ENCODE measurements at regions of chr14 and their contacts with region 1.

Region 1: GRCh38 chr14:68466491-68467032 is 326.3 kb downstream of the ZFP36L1 start:
- DNase-seq: peak; percentile 65 to 100
- H3K4me3 ChIP-seq: peak overlapping the region; percentile 23; the same call in 1 of the 2 replicates
- H3K27ac ChIP-seq: peak overlapping the region; percentile 96
- H3K4me1 ChIP-seq: peaks cover 95% of the 10 kb centered on the region
- H3K27me3 ChIP-seq: no peaks in the 10 kb centered on the region
- CTCF ChIP-seq: no peak

Region 2: GRCh38 chr14:67883717-67884116 is 582.8 kb before region 1 on chr14:
- CTCF ChIA-PET with region 1: no interaction called
- POLR2A ChIA-PET with region 1: interaction called, 30 read pairs
- intact Hi-C with region 1: no loop called
- DNase-seq: peak in 1 of 2 experiments; percentile 43
- H3K4me3 ChIP-seq: no peak overlapping the region
- H3K27ac ChIP-seq: no peak overlapping the region
- H3K4me1 ChIP-seq: no peaks in the 10 kb centered on the region
- H3K27me3 ChIP-seq: no peaks in the 10 kb centered on the region
- CTCF ChIP-seq: peak; percentile 64

Region 3: DNA sequence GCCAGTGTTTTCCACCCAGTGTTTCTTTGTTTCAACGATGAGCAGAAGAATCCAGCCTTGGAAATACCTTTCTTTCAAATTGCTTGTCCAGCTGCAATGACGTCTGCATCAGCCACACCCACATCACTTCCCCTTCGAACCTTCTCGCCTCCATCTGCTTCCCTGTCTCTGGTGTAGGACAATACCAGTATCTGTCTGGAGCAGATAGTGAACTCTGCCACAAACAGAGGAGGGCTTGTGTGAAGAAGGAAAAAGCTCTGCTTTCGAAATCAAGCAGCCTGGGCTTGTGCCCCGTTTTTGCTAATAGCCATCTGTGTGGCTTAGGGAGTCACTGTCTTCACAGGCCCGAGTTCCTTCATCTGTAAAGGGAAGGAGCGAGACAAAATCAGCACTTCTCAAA is 89.1 kb before region 1 on chr14:
- CTCF ChIA-PET with region 1: no interaction called
- POLR2A ChIA-PET with region 1: no interaction called
- intact Hi-C with region 1: no loop called
- DNase-seq: no peak
- H3K4me3 ChIP-seq: no peak overlapping the region
- H3K27ac ChIP-seq: no peak overlapping the region
- H3K4me1 ChIP-seq: peaks cover 41% of the 10 kb centered on the region
- H3K27me3 ChIP-seq: no peaks in the 10 kb centered on the region
- CTCF ChIP-seq: no peak

Region 4: GRCh38 chr14:68479247-68479646 is 12.7 kb after region 1 on chr14:
- CTCF ChIA-PET with region 1: no interaction called
- POLR2A ChIA-PET with region 1: no interaction called
- intact Hi-C with region 1: loop called (anchors 1 kb)
- DNase-seq: peak; percentile 57 to 94
- H3K4me3 ChIP-seq: no peak overlapping the region
- H3K27ac ChIP-seq: peak overlapping the region; percentile 95
- H3K4me1 ChIP-seq: peaks cover 86% of the 10 kb centered on the region
- H3K27me3 ChIP-seq: no peaks in the 10 kb centered on the region
- CTCF ChIP-seq: no peak

Region 5: DNA sequence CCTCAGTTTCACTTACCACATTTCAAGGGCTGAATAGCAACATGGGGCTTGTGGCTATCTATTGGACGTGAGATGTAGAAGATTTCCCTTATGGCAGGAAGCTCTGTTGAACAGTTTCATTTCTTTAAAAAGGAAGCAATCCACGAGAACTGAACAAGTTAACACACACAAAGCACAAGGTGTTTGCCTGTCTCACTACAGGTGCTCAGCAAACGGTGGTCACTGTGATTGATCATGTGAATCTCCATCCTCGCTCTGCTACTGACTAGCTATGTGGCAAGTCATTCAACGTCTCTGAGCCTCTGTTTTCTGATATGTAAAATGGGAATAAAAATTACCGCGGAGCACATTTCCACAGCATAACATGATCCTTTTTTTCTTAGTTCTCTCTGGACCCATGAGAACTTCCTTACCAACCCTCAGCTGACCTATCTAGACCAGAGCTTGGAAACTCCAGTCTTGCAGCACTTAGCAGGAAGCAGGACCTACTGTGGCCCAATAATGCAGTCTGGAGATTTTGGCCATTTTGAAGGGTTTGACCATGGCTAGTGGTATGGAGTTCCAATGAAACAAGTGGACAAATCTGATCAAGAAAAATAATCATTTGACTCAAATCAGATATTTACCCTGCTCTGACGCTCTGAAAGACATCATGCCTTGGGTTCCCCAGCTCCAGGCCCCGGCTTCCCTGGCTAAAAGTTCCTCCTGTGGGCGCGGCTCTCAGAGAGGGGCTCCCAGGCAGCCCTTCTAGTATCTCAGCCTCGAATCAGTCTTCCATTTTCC is 47.5 kb after region 1 on chr14:
- CTCF ChIA-PET with region 1: no interaction called
- POLR2A ChIA-PET with region 1: no interaction called
- intact Hi-C with region 1: loop called (anchors 1 kb)
- DNase-seq: no peak
- H3K4me3 ChIP-seq: no peak overlapping the region
- H3K27ac ChIP-seq: peak overlapping the region; percentile 83
- H3K4me1 ChIP-seq: peaks cover 61% of the 10 kb centered on the region
- H3K27me3 ChIP-seq: no peaks in the 10 kb centered on the region
- CTCF ChIP-seq: no peak

Region 6: GRCh38 chr14:68805414-68805813 is 338.9 kb after region 1 on chr14:
- CTCF ChIA-PET with region 1: no interaction called
- POLR2A ChIA-PET with region 1: no interaction called
- intact Hi-C with region 1: no loop called
- DNase-seq: no peak
- H3K4me3 ChIP-seq: no peak overlapping the region
- H3K27ac ChIP-seq: no peak overlapping the region
- H3K4me1 ChIP-seq: peaks cover 8% of the 10 kb centered on the region
- H3K27me3 ChIP-seq: no peaks in the 10 kb centered on the region
- CTCF ChIP-seq: no peak

Region 7: DNA sequence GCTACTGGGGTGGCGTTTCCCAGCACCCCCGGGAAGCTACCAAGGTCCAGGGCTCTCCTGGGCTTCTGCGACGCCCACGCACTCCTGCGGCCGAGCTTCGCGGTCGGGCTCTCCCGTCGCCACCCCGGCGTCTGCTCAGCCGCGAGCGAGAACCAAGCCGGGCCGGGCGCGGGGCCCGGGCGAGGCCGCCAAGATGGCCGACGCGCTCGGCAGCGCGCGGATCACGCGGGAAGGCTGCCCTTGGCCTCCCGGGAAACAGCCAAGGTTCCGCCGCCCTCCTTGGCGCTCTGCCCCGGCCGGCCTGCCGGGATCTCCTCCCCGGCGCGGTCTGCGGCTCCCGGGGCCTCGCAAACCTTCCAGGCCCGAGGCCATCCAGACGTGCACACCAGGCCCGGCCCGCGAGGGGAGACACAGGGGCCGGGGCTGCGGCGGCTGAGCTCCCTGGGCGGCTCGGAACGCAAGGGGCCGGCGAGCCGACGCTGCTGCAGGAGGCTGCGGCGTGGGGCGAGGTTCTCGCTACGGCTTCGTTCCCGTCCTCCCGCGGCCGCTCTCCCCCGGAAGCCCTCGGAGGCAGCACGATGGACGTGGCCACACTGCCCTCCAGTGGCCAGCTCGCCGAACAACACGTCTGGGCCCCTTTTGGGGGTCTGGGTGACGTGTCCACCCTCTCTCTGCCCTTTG is 349.8 kb after region 1 on chr14:
- CTCF ChIA-PET with region 1: no interaction called
- POLR2A ChIA-PET with region 1: interaction called, 3 read pairs
- intact Hi-C with region 1: loop called (anchors 5 kb)
- DNase-seq: peak; percentile 69 to 92
- H3K4me3 ChIP-seq: peak overlapping the region; percentile 57
- H3K27ac ChIP-seq: peak overlapping the region; percentile 81
- H3K4me1 ChIP-seq: peaks cover 50% of the 10 kb centered on the region
- H3K27me3 ChIP-seq: no peaks in the 10 kb centered on the region
- CTCF ChIP-seq: peak; percentile 98

Measured in PC-9 (cell line).